ENCODE measurements at regions of chr15 and their contacts with region 1.

Region 1: DNA sequence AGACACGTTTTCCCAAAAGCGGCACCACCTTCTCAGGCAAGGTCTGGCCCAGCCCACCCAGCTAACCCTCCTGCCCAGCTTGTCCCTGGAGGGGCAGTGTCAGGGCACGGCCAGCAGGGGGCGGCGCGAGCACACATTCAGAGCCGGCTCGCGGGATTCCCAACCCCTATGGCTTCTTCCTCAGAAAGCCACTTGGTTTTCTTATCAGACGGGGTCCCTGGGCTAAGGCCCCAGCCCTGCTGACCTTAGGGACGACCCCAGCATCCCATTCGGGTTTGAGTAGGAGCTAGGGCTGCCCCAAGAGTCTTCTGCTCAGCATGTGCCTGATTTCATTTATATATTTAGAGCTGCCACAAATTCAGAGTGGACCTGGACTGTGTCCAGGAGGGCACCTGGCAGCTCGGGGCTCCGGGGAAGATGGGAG is 14.5 kb downstream of the RLBP1 start:
- DNase-seq: peak; percentile 94
- H3K4me3 ChIP-seq: peak overlapping the region; percentile 8 to 48 (median 24)
- H3K27ac ChIP-seq: no peak overlapping the region
- H3K4me1 ChIP-seq: peaks cover 4 to 9% (median 8%) of the 10 kb centered on the region in 4 donors
- H3K27me3 ChIP-seq: no peaks in the 10 kb centered on the region
- CTCF ChIP-seq: peak in 2 of 3 experiments; percentile 90 to 97
- EP300 ChIP-seq: no peak
- POLR2A ChIP-seq: no peak

Region 2: DNA sequence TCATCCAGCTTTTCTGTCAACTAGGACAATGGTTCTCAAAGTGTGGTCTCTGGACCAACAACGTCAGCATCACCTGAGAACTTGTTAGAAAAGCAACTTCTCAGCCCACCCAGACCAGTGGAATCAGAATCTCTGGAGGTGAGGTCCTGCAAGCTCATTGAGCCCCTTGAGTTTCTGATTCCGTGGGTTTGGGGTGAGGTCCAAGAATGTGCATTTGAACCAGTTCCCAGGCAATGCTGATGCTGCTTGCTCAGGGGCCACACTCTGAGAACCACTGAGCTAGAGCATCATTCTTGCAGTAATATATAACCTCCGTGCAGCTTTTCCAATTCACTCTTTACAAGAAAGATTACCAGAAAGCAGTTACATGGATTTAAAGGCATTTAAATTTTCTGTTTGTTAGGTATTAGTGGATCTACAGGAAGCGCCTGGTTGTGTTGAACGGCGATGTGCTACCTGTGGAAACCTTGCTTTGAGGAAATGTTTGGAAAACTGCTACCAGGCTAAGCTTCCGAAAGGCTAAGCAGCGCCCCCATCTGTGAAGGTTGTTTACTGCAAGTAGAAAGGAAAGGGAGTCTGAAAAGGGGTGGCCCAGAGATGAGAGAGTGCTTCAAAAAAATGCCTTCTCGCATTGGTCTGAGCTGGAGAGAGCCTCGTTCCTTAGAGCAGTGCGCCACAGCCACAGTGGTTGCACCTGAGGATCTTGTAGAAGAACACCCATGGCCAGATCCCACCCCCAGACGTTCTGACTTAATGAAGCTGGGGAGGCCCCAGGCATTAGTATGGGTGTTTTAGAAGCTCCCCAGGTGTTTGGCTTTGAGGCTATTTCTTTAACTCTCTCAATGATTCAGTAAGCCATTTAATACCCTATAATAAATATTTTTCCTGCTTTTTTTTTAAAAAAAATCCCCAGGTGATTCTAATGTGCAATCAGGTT is 35.5 kb before region 1 on chr15:
- intact Hi-C with region 1: no loop called
- DNase-seq: no peak
- H3K4me3 ChIP-seq: no peak overlapping the region
- H3K27ac ChIP-seq: no peak overlapping the region
- H3K4me1 ChIP-seq: peaks cover 26 to 41% (median 39%) of the 10 kb centered on the region in 4 donors
- H3K27me3 ChIP-seq: no peaks in the 10 kb centered on the region
- CTCF ChIP-seq: peak; percentile 65 to 73 (median 70)
- EP300 ChIP-seq: no peak
- POLR2A ChIP-seq: no peak

Region 3: DNA sequence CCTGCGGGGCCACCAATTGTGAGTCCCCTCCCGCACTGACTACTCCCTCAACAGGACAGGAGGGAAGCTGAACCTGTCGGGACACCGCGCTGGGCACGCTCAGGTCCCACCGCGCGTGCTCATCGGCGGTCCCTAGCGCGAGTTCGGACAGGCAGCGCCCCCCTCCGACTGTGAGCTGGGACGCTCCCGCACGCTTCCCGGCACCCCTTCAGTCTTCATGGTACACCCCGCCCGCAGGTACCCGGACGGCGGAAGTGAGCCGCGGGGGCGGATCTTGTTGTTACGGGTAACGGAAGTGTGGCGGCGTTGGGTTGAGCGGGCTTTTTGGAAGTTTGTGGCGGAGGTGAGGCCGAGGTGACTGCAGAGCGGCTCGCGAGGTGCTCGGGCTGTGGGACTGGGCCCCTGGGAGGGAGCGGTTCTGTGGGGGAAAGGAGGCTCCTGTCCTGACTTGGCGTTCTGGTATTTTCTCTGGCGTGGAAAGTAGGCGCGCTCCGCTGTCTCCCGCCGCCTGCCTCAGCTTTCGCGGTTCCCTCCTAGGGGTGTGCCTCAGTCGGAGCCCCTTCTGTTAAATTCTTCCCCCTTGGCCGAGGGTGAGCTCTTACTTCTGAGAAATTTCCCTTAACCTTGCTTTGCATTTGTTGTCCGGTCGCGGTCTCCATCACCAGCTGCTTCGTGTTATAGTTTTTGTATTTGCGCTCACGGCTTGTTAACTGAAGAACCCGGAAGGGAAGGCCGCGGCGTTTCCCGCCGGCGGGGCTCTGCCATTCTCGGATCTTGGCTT is 37.0 kb after region 1 on chr15 and contains the start of gene FANCI:
- intact Hi-C with region 1: loop called (anchors 5 kb)
- DNase-seq: peak; percentile 97
- H3K4me3 ChIP-seq: peak within 1 kb of the TSS; percentile 61 to 86 (median 74)
- H3K27ac ChIP-seq: peak within 1 kb of the TSS; percentile 54 to 71 (median 60)
- H3K4me1 ChIP-seq: peaks cover 16 to 21% (median 17%) of the 10 kb centered on the region in 4 donors
- H3K27me3 ChIP-seq: no peaks in the 10 kb centered on the region
- CTCF ChIP-seq: peak; percentile 46 to 59 (median 51)
- EP300 ChIP-seq: no peak
- POLR2A ChIP-seq: no peak
- total RNA-seq, gene FANCI: 3.5 to 10.2 (median 4.0) TPM

Region 4: GRCh38 chr15:89299896-89300295 is 93.0 kb after region 1 on chr15:
- intact Hi-C with region 1: loop called (anchors 10 kb)
- DNase-seq: no peak
- H3K4me3 ChIP-seq: no peak overlapping the region
- H3K27ac ChIP-seq: no peak overlapping the region
- H3K4me1 ChIP-seq: no peaks in the 10 kb centered on the region
- H3K27me3 ChIP-seq: no peaks in the 10 kb centered on the region
- CTCF ChIP-seq: peak in 2 of 3 experiments; percentile 20 to 26
- EP300 ChIP-seq: no peak
- POLR2A ChIP-seq: no peak

Region 5: GRCh38 chr15:89430530-89431341 is 223.8 kb after region 1 on chr15:
- intact Hi-C with region 1: loop called (anchors 10 kb)
- DNase-seq: peak; percentile 96
- H3K4me3 ChIP-seq: peak overlapping the region; percentile 49 to 64 (median 50)
- H3K27ac ChIP-seq: no peak overlapping the region
- H3K4me1 ChIP-seq: peaks cover 12 to 13% (median 13%) of the 10 kb centered on the region in 4 donors
- H3K27me3 ChIP-seq: peaks cover 0 to 31% (median 0%) of the 10 kb centered on the region in 4 donors
- CTCF ChIP-seq: peak; percentile 95 to 100 (median 100)
- EP300 ChIP-seq: no peak
- POLR2A ChIP-seq: no peak